ENCODE measurements at regions of chr22 and their contacts with region 1.

Region 1: DNA sequence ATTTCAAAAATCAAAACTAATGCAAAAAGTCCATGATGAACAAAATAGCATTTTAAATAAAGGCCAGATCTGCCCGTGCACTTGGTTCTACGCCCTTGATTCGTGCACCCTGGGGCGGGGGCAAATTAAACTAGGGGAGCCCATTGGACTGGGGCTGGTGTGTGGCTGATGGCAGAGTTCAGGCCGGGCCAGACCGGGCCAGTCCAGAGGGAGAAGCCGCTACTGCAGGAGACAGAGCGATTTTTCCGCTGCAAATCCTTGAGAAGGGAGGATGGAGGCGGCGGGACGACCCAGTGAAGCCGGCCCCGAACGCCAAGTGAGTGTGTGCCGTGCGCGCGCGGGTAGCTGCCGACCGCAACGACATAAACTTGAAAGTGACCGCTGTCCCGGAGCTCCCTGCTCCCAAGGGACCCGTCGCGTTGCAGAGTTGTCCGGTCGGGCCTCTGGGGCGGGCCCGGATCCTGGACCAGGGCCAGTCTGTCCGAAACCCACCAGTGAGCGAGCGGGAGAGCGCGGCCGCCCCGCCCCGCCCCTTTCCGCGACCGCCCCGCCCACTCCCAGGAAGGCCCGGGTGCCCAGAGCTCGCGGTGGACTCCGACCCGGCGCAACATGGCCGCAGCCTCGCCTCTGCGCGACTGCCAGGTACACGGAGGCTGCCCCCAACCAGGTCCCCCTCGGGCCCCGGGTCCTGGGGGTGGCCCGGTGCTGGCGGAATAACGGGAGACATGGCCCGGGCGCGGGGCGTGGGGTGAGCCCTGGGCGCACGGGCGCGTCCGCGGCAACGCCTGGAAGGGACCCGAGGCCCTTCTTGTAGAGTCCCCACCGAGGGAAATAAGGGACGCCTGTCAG is at the start of gene TTC38:
- DNase-seq: peak; percentile 83
- H3K4me3 Mint-ChIP-seq: peak within 1 kb of the TSS; percentile 84
- H3K27ac Mint-ChIP-seq: peak within 1 kb of the TSS; percentile 82
- H3K4me1 Mint-ChIP-seq: peaks cover 14% of the 10 kb centered on the region
- H3K27me3 Mint-ChIP-seq: no peaks in the 10 kb centered on the region
- CTCF ChIP-seq: no peak
- total RNA-seq, gene TTC38: 16.7 and 17.8 TPM in 2 replicates

Region 2: DNA sequence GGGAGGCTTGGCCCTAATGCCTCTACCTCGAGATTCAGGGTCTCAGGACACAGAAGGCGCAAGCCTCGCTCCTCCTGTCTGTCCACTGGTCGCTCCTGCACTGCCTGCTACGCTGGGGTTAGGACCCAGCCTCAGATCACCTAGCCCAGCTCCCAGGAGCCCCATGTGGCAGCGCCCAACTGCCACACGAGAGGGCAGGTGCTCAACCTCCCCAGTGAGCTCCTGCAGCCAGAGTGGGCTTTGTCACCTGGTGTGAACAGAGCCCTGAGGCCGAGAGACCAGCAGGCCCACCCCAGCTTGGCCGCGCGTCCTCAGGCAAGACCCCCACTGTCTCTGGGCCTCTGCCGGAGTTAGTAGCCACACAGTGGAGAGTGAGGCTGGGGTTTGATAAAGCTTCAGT is 139.0 kb before region 1 on chr22:
- CTCF ChIA-PET with region 1: no interaction called
- POLR2A ChIA-PET with region 1: no interaction called
- intact Hi-C with region 1: no loop called
- DNase-seq: no peak
- H3K4me3 Mint-ChIP-seq: no peak overlapping the region
- H3K27ac Mint-ChIP-seq: no peak overlapping the region
- H3K4me1 Mint-ChIP-seq: peaks cover 5% of the 10 kb centered on the region
- H3K27me3 Mint-ChIP-seq: no peaks in the 10 kb centered on the region
- CTCF ChIP-seq: no peak

Region 3: DNA sequence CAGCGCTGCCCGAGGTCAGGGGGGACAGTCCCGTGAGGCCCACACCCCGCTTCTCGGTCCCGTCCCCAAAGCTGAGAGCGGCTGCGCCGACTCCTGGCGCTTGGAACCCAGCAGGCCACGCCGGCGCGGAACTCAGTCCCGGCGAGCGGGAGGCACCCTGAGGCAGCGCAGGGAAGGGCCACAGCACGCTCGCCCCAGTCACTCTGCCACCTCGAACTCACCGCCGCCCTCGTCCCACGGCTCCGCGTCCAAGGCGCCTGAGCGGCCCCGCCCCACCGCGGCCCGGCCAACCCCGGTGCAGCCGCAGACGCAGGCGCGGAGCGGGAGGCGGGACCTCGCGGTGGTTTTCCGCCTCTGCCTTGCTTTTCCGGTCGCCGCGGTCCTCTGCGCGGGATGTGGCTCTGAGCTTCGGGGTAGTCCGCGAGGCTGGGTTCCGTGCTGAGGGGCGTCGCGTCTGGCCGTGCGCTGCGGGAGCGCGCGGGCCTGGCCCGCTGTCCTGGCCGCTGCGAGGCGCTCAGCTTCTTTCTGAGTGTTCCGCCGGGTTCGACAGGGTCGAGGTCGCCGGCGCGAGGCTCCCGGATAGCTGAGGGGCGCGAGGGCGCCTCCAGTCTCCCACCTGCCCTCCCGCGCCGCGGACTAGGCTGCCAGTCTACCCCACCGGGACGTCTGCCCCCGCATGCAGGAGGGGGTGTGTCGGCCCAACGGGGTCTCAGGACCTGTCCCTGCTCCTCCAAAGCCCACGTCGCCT is 17.4 kb before region 1 on chr22 and contains the start of gene CDPF1:
- CTCF ChIA-PET with region 1: no interaction called
- POLR2A ChIA-PET with region 1: interaction called, 29 read pairs
- intact Hi-C with region 1: no loop called
- DNase-seq: peak; percentile 87
- H3K4me3 Mint-ChIP-seq: peak within 1 kb of the TSS; percentile 81
- H3K27ac Mint-ChIP-seq: peak within 1 kb of the TSS; percentile 19
- H3K4me1 Mint-ChIP-seq: peaks cover 5% of the 10 kb centered on the region
- H3K27me3 Mint-ChIP-seq: no peaks in the 10 kb centered on the region
- CTCF ChIP-seq: no peak
- total RNA-seq, gene CDPF1: 6.3 and 9.0 TPM in 2 replicates

Region 4: GRCh38 chr22:46296257-46297150 is 28.8 kb after region 1 on chr22 and contains the start of gene GTSE1:
- CTCF ChIA-PET with region 1: interaction called, 3 read pairs
- POLR2A ChIA-PET with region 1: interaction called, 5 read pairs
- intact Hi-C with region 1: loop called (anchors 1 kb)
- DNase-seq: peak; percentile 98
- H3K4me3 Mint-ChIP-seq: peak within 1 kb of the TSS; percentile 86
- H3K27ac Mint-ChIP-seq: peak within 1 kb of the TSS; percentile 97
- H3K4me1 Mint-ChIP-seq: peaks cover 27% of the 10 kb centered on the region
- H3K27me3 Mint-ChIP-seq: no peaks in the 10 kb centered on the region
- CTCF ChIP-seq: no peak
- total RNA-seq, gene GTSE1: 12.7 and 19.9 TPM in 2 replicates